Left cardiac atrium (tissue), 4 donors: ENCODE measurements at regions of chr4 and their contacts with region 1.

Region 1: DNA sequence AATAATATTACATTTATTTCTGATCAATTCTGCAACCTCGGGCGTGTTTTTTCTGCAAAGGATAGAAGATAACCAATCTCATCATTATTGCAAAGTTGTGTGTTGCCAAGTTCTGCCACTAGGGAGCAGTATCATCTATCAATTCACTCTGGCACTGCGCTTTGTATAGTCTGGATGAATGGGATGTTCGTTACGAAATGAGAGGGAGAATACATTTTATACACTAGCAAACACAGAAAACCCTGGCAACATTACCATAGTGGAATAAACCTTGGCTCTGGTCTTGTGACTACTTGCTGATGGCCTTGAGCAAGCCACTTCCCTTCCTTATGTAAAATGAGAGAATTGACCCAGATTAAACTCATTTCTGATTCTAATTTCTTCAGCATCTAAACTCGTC is 97.5 kb upstream of the ZNF518B start:
- DNase-seq: no peak
- ATAC-seq: peak; percentile 78 to 82

Region 2: DNA sequence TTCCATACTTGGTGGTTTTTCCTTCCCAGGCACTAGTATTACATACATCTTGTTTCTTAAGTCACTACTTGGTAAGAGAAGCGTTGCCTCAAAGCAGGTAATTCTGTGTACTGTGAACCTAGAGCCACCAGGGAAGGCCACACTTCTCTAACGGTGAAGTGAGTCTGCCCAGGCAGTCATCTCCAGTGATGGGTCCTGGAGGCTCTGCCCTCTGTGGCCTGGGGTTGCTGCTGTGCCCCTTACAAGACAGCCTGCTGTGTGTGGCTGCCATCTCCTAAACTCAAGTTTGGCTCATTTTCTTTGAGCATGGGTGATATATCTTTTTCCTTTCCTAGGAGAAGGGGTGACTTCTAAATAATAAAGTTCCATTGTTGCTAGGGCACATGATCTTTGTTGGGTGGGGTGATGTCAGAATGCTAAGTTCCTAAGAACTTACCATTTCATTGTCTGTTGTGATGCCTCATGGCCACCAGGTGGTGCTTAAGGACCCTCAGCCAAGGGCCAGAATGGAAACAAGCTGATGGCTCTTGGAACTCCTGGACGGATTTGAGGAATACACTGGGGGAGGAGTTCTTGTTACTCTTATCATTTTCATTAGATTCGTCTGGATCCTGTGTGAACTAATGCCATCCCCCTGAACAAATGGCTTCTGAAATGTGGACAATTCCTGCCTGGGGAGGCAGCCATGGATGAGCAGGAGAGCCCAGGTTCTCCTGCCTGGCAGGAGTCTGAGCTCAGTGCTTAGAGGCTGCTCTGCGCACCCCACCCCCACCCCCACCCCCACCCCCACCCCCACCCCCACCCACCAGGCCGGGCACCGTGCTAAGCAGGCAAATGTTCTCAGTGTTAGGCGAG is 397.0 kb before region 1 on chr4:
- intact Hi-C with region 1: loop called (anchors 2 to 5 kb)
- DNase-seq: peak; percentile 59
- ATAC-seq: peak; percentile 66 to 78

Region 3: GRCh38 chr4:10403633-10404445 is 150.9 kb before region 1 on chr4:
- intact Hi-C with region 1: loop called in 1 of 2 experiments (anchors 10 kb)
- DNase-seq: no peak
- ATAC-seq: peak; percentile 56 to 57

Region 4: DNA sequence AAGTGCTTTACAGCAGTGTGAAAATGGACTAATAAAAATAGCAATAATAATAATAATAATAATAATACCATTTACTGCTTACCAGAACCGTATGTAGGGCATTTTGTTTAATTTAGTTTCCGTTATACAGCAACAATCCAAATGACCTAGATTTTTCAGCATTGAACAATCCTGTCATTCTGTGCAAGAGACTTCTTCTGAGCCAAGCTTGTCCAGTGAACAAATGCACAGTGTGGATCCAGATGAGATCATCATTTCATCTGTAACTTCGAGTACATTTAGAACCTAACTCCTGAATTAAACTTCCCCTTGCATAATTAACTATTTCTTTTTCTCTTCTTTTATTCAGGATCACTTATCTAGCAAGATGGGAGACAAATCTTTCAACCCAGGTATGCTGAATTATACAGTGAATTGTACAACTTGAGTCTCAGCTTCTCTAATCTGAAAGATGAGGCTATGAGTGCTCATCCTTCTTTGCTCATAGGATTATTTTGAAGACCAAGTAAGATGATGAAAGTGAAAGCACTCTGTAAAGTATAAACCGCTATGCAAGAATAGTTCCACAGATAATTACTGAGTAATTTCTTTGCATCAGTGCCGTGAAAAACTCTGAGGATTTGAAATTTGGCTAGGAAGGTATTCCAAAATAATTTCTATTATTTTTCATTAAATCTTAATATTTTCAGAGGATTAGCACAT is 123.3 kb after region 1 on chr4:
- intact Hi-C with region 1: no loop called
- DNase-seq: no peak
- ATAC-seq: peak in 1 of 2 donors; percentile 77